IMR-90 (cell line): ENCODE measurements at regions of chr13 and their contacts with region 1.

Region 1: GRCh38 chr13:27043013-27043412 is 128.6 kb downstream of the USP12 start:
- DNase-seq: peak; percentile 98
- ATAC-seq: peak; percentile 93
- H3K4me3 ChIP-seq: no peak overlapping the region
- H3K27ac ChIP-seq: no peak overlapping the region
- H3K4me1 ChIP-seq: peaks cover 8% of the 10 kb centered on the region
- H3K27me3 ChIP-seq: no peaks in the 10 kb centered on the region
- CTCF ChIP-seq: no peak
- POLR2A ChIP-seq: no peak
- RAD21 ChIP-seq: peak; percentile 23; the same call in 1 of the 2 replicates

Region 2: GRCh38 chr13:26813321-26813979 is 229.6 kb before region 1 on chr13:
- CTCF ChIA-PET with region 1: no interaction called
- POLR2A ChIA-PET with region 1: no interaction called
- dilution Hi-C with region 1: no loop called
- in situ Hi-C with region 1: no loop called
- intact Hi-C with region 1: no loop called
- DNase-seq: no peak
- ATAC-seq: no peak
- H3K4me3 ChIP-seq: no peak overlapping the region
- H3K27ac ChIP-seq: no peak overlapping the region
- H3K4me1 ChIP-seq: no peaks in the 10 kb centered on the region
- H3K27me3 ChIP-seq: peaks cover 7% of the 10 kb centered on the region
- CTCF ChIP-seq: no peak
- POLR2A ChIP-seq: no peak
- RAD21 ChIP-seq: no peak

Region 3: DNA sequence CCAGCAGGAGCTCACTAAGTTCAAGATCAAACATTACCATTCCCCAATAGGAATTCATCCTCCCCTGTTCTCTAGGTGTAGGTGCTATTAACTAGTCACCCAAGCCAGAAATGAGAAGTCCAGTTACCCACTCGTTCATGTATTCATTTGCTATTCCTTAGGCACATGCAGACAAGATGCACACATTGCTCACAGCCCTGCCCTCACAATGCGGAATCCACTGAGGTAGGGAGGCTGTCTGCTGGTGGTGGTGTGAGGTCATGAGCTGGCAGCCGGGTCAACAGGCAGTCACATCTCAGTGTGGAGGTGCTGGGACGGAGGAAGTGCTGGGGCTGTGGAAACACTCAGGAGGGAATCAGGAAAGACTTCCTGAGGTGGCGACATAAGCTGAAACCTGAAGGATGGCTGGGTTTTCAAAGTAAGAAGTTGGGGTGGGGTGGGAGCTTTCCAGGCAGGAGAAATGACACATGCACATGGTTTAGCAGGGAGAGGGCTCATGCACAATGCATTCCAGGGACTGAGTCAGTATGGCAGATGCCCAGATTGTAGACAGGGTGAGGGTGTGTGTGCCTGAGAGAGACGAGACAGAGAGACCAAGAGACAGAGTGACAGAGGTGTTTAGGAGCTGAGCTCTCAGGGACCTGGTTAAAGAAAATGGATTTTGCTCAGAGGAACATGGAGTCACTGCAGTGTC is 11.0 kb after region 1 on chr13:
- CTCF ChIA-PET with region 1: no interaction called
- POLR2A ChIA-PET with region 1: no interaction called
- dilution Hi-C with region 1: no loop called
- in situ Hi-C with region 1: no loop called
- intact Hi-C with region 1: loop called (anchors 1 kb)
- DNase-seq: peak; percentile 88
- ATAC-seq: peak; percentile 91
- H3K4me3 ChIP-seq: no peak overlapping the region
- H3K27ac ChIP-seq: peak overlapping the region; percentile 36; the same call in 1 of the 2 replicates
- H3K4me1 ChIP-seq: peaks cover 16% of the 10 kb centered on the region
- H3K27me3 ChIP-seq: no peaks in the 10 kb centered on the region
- CTCF ChIP-seq: no peak
- POLR2A ChIP-seq: no peak
- RAD21 ChIP-seq: no peak